Heart right ventricle (tissue), 16 donors: ENCODE measurements at regions of chr1 and their contacts with region 1.

Region 1: GRCh38 chr1:68173911-68174737 is 58.2 kb downstream of the WLS start:
- DNase-seq: peak; percentile 23 to 78
- ATAC-seq: peak; percentile 62 to 81 (median 76)
- H3K4me3 ChIP-seq: peak overlapping the region in 6 of 10 donors; percentile 0 to 8 (median 4)
- H3K27ac ChIP-seq: peak overlapping the region; percentile 25 to 88 (median 73)
- H3K4me1 ChIP-seq: peaks cover 12 to 75% (median 55%) of the 10 kb centered on the region in 9 donors
- H3K27me3 ChIP-seq: no peaks in the 10 kb centered on the region
- CTCF ChIP-seq: no peak

Region 2: DNA sequence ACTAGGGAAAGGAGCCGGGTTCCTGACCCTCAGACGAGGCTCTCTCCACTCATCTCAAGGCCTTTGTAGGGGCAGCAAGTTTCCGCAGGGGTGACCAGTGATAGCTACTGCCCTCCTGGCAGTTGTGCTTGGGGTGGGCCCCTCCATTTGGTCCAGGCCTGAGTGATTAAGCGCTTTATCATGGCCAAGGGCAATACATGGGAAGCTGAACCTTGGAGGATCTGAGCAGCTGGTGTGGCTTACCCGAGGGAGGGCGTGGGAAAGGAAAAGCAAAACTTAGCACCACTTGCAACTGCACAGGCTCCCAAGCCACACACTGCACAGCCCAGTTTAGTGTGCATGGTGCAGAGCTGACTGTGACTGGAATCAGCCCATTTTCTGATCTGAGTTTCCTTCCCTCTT is 441.4 kb before region 1 on chr1:
- intact Hi-C with region 1: no loop called
- DNase-seq: peak; percentile 34 to 62
- ATAC-seq: peak; percentile 55 to 84 (median 75)
- H3K4me3 ChIP-seq: no peak overlapping the region
- H3K27ac ChIP-seq: peak overlapping the region in 8 of 10 donors; percentile 14 to 76 (median 60)
- H3K4me1 ChIP-seq: peaks cover 15 to 61% (median 51%) of the 10 kb centered on the region in 9 donors
- H3K27me3 ChIP-seq: no peaks in the 10 kb centered on the region
- CTCF ChIP-seq: no peak

Region 3: DNA sequence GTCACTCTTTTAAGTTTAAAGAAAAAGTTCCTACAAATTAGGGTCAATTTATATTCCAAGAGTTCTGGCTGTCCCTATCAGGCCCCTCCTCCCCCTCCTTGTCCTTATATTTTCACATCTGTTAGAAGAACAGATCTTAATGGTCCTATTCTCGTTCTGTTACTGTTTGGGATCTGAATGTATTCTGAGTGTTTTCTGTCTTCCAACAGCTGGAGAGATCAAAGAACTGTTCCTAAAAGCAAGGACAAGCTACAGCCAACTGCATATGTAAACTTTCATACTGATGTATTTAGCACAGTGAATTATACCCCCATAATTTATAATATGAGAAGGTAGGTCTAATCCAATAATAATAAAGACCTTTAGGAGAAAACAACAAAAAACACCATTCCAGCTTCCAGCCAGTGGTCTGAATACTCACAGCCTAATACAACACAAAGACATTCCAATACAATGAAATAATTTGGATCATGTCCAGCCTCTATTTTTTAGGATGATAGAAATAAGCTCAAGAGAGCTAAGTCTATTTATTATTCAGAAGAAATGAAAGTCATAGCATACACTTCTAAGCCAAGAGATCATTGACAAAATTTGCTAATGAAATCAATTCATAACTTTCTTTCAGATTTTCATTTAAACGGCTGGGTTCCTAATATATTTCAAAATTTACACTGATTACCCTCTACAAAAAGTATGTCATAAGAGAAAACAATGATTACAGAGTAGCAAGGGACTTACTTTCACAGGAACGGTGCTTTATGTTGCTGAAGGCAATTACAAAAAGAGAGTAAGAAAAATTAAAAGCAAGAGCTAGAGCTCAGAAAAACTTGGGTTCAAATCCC is 32.9 kb after region 1 on chr1:
- intact Hi-C with region 1: loop called in 1 of 10 experiments (anchors 5 kb)
- DNase-seq: no peak
- ATAC-seq: peak in 6 of 8 donors; percentile 20 to 67 (median 52)
- H3K4me3 ChIP-seq: no peak overlapping the region
- H3K27ac ChIP-seq: peak overlapping the region in 6 of 10 donors; percentile 7 to 69 (median 24)
- H3K4me1 ChIP-seq: peaks cover 0 to 87% (median 52%) of the 10 kb centered on the region in 9 donors
- H3K27me3 ChIP-seq: no peaks in the 10 kb centered on the region
- CTCF ChIP-seq: no peak

Region 4: DNA sequence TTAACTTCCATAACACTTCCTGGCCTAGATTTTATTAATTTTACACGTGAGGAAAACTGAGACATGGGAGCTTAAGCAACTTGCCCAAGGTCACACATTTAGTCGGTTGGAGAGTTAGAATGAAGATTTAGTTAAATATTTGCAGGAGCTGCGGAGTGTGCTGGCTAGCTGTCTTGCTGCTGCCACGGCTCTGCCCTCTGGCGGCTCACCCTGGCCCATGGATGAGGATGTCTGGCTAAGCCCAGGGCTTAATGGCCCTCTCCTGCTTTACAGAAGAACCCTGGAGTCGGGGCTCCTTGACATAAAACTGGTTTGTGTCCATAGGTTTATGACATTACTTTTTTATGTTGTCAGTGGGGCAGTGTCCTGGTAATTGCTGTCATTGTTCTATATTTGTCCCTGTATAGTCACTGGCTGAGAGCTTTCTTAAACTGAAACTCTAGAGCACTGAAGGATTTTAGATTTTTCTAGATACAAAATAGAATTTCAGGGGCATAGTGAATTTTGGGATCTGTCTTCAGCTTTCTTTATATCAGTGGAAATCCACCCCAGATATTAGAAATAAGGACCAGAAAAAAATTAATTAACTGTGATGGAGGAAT is 147.1 kb after region 1 on chr1:
- intact Hi-C with region 1: loop called in 1 of 10 experiments (anchors 1 kb)
- DNase-seq: peak; percentile 53 to 64
- ATAC-seq: peak; percentile 87 to 94 (median 91)
- H3K4me3 ChIP-seq: no peak overlapping the region
- H3K27ac ChIP-seq: no peak overlapping the region
- H3K4me1 ChIP-seq: peaks cover 0 to 14% (median 0%) of the 10 kb centered on the region in 9 donors
- H3K27me3 ChIP-seq: no peaks in the 10 kb centered on the region
- CTCF ChIP-seq: peak; percentile 26 to 84 (median 77)

Region 5: DNA sequence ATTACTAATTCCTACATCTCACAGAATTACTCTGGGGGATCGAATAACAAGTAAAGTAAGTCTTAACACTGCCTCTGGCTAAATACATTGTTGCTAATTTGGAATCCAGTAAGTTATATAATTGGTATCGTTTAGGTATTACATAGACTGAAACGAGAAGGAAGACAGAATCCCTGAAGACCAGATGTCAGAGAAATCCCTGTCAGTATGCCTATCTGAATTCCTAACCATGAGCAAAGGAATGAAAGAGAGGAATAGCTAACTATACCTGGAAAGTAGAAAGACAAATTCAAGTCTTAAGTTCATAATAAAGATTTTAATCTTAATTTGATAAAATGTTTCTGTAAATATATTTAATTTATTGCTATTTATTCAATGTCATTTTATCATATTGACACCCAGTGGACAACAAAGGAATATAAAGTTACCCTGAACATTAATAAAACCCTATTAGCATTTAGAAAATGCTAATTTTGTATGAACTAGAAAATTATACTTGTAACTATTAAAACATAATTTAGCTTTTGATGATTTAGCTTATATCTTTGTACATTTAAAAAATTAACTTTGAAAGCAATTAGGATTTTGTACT is 311.4 kb after region 1 on chr1:
- intact Hi-C with region 1: no loop called
- DNase-seq: no peak
- ATAC-seq: no peak
- H3K4me3 ChIP-seq: no peak overlapping the region
- H3K27ac ChIP-seq: no peak overlapping the region
- H3K4me1 ChIP-seq: no peaks in the 10 kb centered on the region
- H3K27me3 ChIP-seq: no peaks in the 10 kb centered on the region
- CTCF ChIP-seq: no peak